Activated CD4-positive, alpha-beta memory T cell treated with anti-CD3 and anti-CD28 coated beads for 36 hours (primary cell): ENCODE measurements at regions of chr13 and their contacts with region 1.

Region 1: DNA sequence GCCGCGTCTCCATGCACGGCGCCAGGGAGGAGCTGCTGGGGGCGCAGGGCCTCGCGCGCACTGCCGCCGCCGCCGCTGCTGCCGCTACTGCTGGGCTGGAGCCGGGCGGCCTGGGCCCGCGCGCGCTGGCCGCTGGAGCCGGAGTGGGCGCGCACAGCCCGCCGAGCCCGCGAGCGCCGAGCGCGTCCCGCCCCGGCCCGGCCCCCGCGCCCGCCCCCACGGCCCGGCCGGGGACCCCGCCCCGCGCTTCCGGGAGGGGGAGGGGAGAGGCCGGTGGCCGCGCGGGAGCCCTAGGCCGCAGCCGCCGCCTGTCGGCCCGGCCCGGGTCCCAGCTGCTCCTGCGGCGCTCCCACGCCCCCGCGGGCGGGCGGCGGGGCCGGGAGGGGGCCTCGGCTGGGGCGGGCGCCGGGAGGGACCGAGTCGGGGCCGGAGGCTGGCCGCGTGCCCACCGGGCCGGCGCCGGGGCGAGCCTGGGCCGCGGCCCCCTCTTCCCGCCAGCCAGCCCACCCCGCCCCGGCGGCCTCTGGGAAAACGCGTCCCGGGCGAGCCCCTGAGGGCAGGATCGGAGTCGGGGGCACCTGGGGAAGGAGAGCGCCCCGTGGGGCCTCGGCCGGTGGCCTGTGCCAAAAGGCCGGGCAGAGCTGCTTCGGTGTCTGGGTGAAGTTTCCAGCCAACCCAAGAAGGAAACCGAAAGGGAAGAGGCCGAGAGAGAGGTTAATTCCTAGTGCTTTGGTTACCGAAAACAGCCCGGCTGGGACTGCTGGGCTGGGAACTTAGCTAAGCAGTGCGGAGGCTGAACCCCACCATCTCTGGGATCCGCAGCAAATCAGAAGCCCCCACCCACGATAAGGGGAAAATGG is at the start of gene STK24:
- DNase-seq: peak; percentile 66
- H3K4me3 Mint-ChIP-seq: peak within 1 kb of the TSS; percentile 87
- H3K27ac Mint-ChIP-seq: peak within 1 kb of the TSS; percentile 98
- H3K4me1 Mint-ChIP-seq: peaks cover 40% of the 10 kb centered on the region
- H3K27me3 Mint-ChIP-seq: no peaks in the 10 kb centered on the region
- total RNA-seq, gene STK24: 176 to 178 TPM

Region 2: GRCh38 chr13:97432917-97433726 is 1144.1 kb before region 1 on chr13:
- CTCF ChIA-PET with region 1: no interaction called
- POLR2A ChIA-PET with region 1: no interaction called
- intact Hi-C with region 1: loop called (anchors 10 kb)
- DNase-seq: peak; percentile 99
- H3K4me3 Mint-ChIP-seq: peak overlapping the region; percentile 95
- H3K27ac Mint-ChIP-seq: peak overlapping the region; percentile 99
- H3K4me1 Mint-ChIP-seq: peaks cover 22% of the 10 kb centered on the region
- H3K27me3 Mint-ChIP-seq: peaks cover 3% of the 10 kb centered on the region

Region 3: GRCh38 chr13:98484289-98485219 is 92.6 kb before region 1 on chr13:
- CTCF ChIA-PET with region 1: no interaction called
- POLR2A ChIA-PET with region 1: interaction called, 6 read pairs
- intact Hi-C with region 1: loop called (anchors 1 kb)
- DNase-seq: peak; percentile 87
- H3K4me3 Mint-ChIP-seq: peak overlapping the region; percentile 30
- H3K27ac Mint-ChIP-seq: peak overlapping the region; percentile 83
- H3K4me1 Mint-ChIP-seq: peaks cover 92% of the 10 kb centered on the region
- H3K27me3 Mint-ChIP-seq: no peaks in the 10 kb centered on the region

Region 4: DNA sequence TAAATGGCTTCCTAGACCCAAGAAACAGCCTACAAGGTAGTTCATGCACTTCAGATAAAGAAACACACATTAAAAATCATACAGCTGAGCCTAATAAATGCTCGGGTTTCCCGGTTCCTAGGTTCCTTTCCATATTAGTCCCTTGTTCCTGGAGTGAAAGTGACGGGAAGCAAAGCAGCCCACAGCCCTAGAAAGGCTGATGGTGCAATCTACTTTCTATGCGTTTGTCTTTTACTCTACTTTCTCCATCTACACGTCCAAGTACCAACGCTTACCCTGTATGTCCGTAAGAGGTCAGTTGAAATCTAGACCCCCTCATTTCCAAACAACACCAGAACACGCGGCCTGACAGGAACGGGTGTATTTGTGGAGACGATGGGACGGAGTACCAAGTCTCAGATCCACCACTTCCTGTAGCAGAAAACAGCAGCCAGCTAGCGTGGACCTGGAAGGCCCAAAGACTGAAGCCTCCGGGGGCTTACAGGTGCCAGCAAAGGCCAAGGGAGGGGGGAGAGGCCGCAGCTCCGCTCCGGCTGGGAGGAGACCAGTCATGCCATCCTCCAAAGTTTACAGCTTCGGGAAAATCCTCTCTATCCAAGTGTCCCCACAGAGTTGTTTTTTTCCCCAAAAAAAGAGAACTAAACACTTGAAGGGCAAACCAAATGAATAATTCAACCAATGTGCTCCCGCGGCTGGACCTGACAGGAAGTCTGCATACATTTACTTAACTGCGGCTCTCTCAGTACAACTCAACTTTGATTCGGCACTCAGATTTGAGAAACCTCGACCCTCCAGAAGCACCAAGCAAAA is 34.4 kb before region 1 on chr13:
- CTCF ChIA-PET with region 1: no interaction called
- POLR2A ChIA-PET with region 1: interaction called, 5 read pairs
- intact Hi-C with region 1: loop called (anchors 1 kb)
- DNase-seq: peak; percentile 54
- H3K4me3 Mint-ChIP-seq: peak overlapping the region; percentile 68
- H3K27ac Mint-ChIP-seq: peak overlapping the region; percentile 83
- H3K4me1 Mint-ChIP-seq: peaks cover 94% of the 10 kb centered on the region
- H3K27me3 Mint-ChIP-seq: no peaks in the 10 kb centered on the region

Region 5: DNA sequence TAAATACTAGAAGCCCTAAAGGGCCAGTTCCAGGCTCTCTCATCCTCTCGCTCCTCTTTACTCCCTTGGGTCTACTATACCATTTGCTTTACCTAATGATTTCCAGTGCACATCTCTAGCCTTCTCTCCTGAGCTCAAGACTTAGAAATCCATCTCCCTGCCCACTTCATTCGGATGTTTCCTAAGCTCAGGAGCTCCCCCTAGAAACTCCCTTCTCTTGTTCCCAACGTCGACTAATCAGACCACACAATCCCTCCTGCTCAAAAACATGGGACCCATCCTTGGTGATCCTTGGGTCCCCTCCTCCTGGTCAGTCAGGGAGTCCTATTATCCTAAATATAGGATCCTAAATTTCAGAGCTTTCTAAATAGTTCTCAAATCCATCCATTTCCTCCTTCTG is 20.9 kb after region 1 on chr13:
- CTCF ChIA-PET with region 1: interaction called, 3 read pairs
- POLR2A ChIA-PET with region 1: no interaction called
- intact Hi-C with region 1: loop called (anchors 1 kb)
- DNase-seq: no peak
- H3K4me3 Mint-ChIP-seq: no peak overlapping the region
- H3K27ac Mint-ChIP-seq: no peak overlapping the region
- H3K4me1 Mint-ChIP-seq: peaks cover 13% of the 10 kb centered on the region
- H3K27me3 Mint-ChIP-seq: no peaks in the 10 kb centered on the region

Region 6: GRCh38 chr13:98798849-98799645 is 221.9 kb after region 1 on chr13:
- CTCF ChIA-PET with region 1: no interaction called
- POLR2A ChIA-PET with region 1: no interaction called
- intact Hi-C with region 1: no loop called
- DNase-seq: no peak
- H3K4me3 Mint-ChIP-seq: no peak overlapping the region
- H3K27ac Mint-ChIP-seq: no peak overlapping the region
- H3K4me1 Mint-ChIP-seq: no peaks in the 10 kb centered on the region
- H3K27me3 Mint-ChIP-seq: no peaks in the 10 kb centered on the region

Region 7: GRCh38 chr13:99057310-99057975 is 480.2 kb after region 1 on chr13:
- CTCF ChIA-PET with region 1: no interaction called
- POLR2A ChIA-PET with region 1: no interaction called
- intact Hi-C with region 1: loop called (anchors 10 kb)
- DNase-seq: no peak
- H3K4me3 Mint-ChIP-seq: no peak overlapping the region
- H3K27ac Mint-ChIP-seq: no peak overlapping the region
- H3K4me1 Mint-ChIP-seq: peaks cover 56% of the 10 kb centered on the region
- H3K27me3 Mint-ChIP-seq: no peaks in the 10 kb centered on the region

Region 8: DNA sequence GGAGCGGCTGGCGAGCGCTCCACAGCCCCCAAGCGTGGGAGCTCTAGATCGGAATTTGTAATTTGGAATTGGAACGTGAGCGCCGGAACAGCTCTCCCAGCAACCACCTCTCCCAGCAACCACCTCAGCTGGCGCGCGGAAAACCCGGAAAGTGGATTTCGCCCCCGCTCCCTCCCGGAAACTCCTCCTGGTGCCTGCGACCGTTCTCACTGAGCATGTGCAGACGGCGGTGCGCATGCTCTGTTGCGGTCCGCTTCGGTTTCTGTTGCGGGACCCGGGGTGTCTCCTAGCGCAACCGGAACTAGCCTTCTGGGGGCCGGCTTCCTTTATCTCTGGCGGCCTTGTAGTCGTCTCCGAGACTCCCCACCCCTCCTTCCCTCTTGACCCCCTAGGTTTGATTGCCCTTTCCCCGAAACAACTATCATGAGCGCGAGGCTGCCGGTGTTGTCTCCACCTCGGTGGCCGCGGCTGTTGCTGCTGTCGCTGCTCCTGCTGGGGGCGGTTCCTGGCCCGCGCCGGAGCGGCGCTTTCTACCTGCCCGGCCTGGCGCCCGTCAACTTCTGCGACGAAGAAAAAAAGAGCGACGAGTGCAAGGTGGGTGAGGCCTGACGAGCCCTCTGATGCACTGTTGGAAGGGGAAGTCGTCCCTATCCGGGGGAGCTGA is 924.1 kb after region 1 on chr13 and contains the start of gene TM9SF2:
- CTCF ChIA-PET with region 1: no interaction called
- POLR2A ChIA-PET with region 1: no interaction called
- intact Hi-C with region 1: loop called (anchors 5 kb)
- DNase-seq: peak; percentile 98
- H3K4me3 Mint-ChIP-seq: peak within 1 kb of the TSS; percentile 88
- H3K27ac Mint-ChIP-seq: peak within 1 kb of the TSS; percentile 88
- H3K4me1 Mint-ChIP-seq: peaks cover 67% of the 10 kb centered on the region
- H3K27me3 Mint-ChIP-seq: no peaks in the 10 kb centered on the region
- total RNA-seq, gene TM9SF2: 67.2 to 72.0 TPM